ENCODE measurements at regions of chr16 and their contacts with region 1.

Region 1: GRCh38 chr16:57045694-57046381 is 46.5 kb upstream of the CPNE2 start:
- DNase-seq: peak; percentile 71 to 73
- ATAC-seq: peak; percentile 55 to 83 (median 70)
- H3K4me3 ChIP-seq: peak overlapping the region in 2 of 10 donors; percentile 6 to 27
- H3K27ac ChIP-seq: peak overlapping the region in 1 of 10 donors; percentile 36
- H3K4me1 ChIP-seq: peaks cover 0 to 45% (median 11%) of the 10 kb centered on the region in 9 donors
- H3K27me3 ChIP-seq: no peaks in the 10 kb centered on the region
- CTCF ChIP-seq: peak; percentile 23 to 77 (median 65)

Region 2: GRCh38 chr16:56950881-56951771 is 94.7 kb before region 1 on chr16:
- intact Hi-C with region 1: no loop called
- DNase-seq: peak; percentile 26 to 44
- ATAC-seq: peak; percentile 59 to 76 (median 69)
- H3K4me3 ChIP-seq: no peak overlapping the region
- H3K27ac ChIP-seq: peak overlapping the region in 1 of 10 donors; percentile 7
- H3K4me1 ChIP-seq: peaks cover 0 to 7% (median 0%) of the 10 kb centered on the region in 9 donors
- H3K27me3 ChIP-seq: no peaks in the 10 kb centered on the region
- CTCF ChIP-seq: peak; percentile 22 to 70 (median 63)

Region 3: GRCh38 chr16:56964243-56965148 is 81.3 kb before region 1 on chr16:
- intact Hi-C with region 1: loop called in 6 of 10 experiments (anchors 2 to 10 kb)
- DNase-seq: peak; percentile 90
- ATAC-seq: peak; percentile 35 to 78 (median 64)
- H3K4me3 ChIP-seq: no peak overlapping the region
- H3K27ac ChIP-seq: peak overlapping the region in 5 of 10 donors; percentile 0 to 71 (median 48)
- H3K4me1 ChIP-seq: peaks cover 16 to 80% (median 45%) of the 10 kb centered on the region in 9 donors
- H3K27me3 ChIP-seq: no peaks in the 10 kb centered on the region
- CTCF ChIP-seq: peak; percentile 81 to 99 (median 94)

Region 4: DNA sequence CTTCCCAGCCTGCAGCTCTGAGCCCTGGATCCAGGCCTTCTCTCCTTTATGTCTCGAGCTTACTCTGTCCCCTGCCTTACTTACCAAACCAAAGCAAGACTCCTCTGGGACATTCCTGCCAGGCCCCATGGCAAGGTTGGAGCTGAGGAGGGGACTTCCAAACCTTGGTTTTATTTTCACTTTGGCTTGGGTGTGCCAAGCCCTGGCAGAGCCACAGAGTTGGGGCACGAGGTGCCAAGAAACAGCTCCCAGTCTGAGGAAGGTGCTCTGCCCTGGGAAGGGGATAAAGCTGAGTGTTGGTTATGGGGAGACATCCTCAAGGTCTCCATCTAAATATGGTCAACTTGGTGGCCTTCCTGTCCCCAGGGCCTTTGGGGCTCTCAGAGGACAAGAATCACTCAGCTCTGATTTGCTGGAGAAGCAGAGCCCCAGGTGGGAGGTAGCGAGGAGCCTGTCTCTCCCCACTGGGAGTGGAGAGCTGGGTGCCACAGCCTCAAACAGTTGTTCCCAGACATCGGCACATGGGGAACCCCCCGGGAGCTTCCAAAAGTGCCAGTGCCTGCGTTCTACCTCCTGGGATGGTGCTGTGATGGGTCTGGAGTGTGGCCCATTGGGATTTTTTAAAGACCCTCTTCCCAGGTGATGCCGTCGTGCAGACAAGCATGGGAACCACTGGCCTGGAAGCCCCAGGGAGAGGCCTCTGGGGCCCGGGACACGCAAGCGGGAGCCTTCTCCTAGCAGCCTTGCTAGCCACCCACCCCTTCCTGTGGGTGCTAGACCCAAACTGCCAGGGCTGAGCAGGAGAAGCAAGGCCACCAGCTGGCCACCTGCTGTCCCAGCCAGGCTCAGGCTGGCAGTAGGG is 46.2 kb before region 1 on chr16:
- intact Hi-C with region 1: loop called in 1 of 10 experiments (anchors 5 kb)
- DNase-seq: no peak
- ATAC-seq: no peak
- H3K4me3 ChIP-seq: peak overlapping the region in 1 of 10 donors; percentile 1
- H3K27ac ChIP-seq: peak overlapping the region; percentile 41 to 88 (median 84)
- H3K4me1 ChIP-seq: peaks cover 6 to 61% (median 31%) of the 10 kb centered on the region in 9 donors
- H3K27me3 ChIP-seq: peaks cover 0 to 3% (median 0%) of the 10 kb centered on the region in 7 donors
- CTCF ChIP-seq: no peak

Region 5: GRCh38 chr16:58451945-58452401 is 1406.1 kb after region 1 on chr16:
- intact Hi-C with region 1: no loop called
- DNase-seq: no peak
- ATAC-seq: peak in 2 of 8 donors; percentile 35 to 62
- H3K4me3 ChIP-seq: no peak overlapping the region
- H3K27ac ChIP-seq: peak overlapping the region in 7 of 10 donors; percentile 42 to 83 (median 71)
- H3K4me1 ChIP-seq: peaks cover 0 to 26% (median 4%) of the 10 kb centered on the region in 9 donors
- H3K27me3 ChIP-seq: no peaks in the 10 kb centered on the region
- CTCF ChIP-seq: no peak